Activated B cell treated with CpG ODN at 0.5 μM for 24 hours (primary cell): ENCODE measurements at regions of chr6 and their contacts with region 1.

Region 1: GRCh38 chr6:32752580-32752979 is 10.8 kb downstream of the HLA-DQB2 start:
- DNase-seq: no peak
- ATAC-seq: no peak
- H3K4me3 Mint-ChIP-seq: no peak overlapping the region
- H3K27ac Mint-ChIP-seq: no peak overlapping the region
- H3K4me1 Mint-ChIP-seq: peaks cover 1% of the 10 kb centered on the region
- H3K27me3 Mint-ChIP-seq: peaks cover 7% of the 10 kb centered on the region
- CTCF ChIP-seq: no peak

Region 2: GRCh38 chr6:32642720-32643106 is 109.9 kb before region 1 on chr6:
- CTCF ChIA-PET with region 1: no interaction called
- POLR2A ChIA-PET with region 1: interaction called, 16 read pairs
- intact Hi-C with region 1: no loop called
- DNase-seq: no peak
- ATAC-seq: no peak
- H3K4me3 Mint-ChIP-seq: peak overlapping the region; percentile 100
- H3K27ac Mint-ChIP-seq: peak overlapping the region; percentile 77
- H3K4me1 Mint-ChIP-seq: peaks cover 61% of the 10 kb centered on the region
- H3K27me3 Mint-ChIP-seq: no peaks in the 10 kb centered on the region
- CTCF ChIP-seq: no peak